Heart left ventricle (tissue), 16 donors: ENCODE measurements at regions of chr2 and their contacts with region 1.

Region 1: GRCh38 chr2:190648289-190649034 is 421 bp upstream of the NAB1 start:
- DNase-seq: peak; percentile 95 to 96 (median 95)
- ATAC-seq: peak; percentile 92 to 96 (median 94)
- H3K4me3 ChIP-seq: peak overlapping the region; percentile 72 to 93 (median 82)
- H3K27ac ChIP-seq: peak overlapping the region; percentile 80 to 98 (median 92)
- H3K4me1 ChIP-seq: peaks cover 0 to 49% (median 28%) of the 10 kb centered on the region in 12 donors
- H3K27me3 ChIP-seq: no peaks in the 10 kb centered on the region
- CTCF ChIP-seq: no peak
- POLR2A ChIP-seq: peak; percentile 8 to 79

Region 2: GRCh38 chr2:189350540-189351209 is 1297.8 kb before region 1 on chr2:
- intact Hi-C with region 1: no loop called
- DNase-seq: peak in 2 of 5 donors; percentile 17 to 24
- ATAC-seq: peak; percentile 84 to 92 (median 88)
- H3K4me3 ChIP-seq: no peak overlapping the region
- H3K27ac ChIP-seq: peak overlapping the region in 7 of 12 donors; percentile 9 to 80 (median 35)
- H3K4me1 ChIP-seq: peaks cover 0 to 26% (median 0%) of the 10 kb centered on the region in 12 donors
- H3K27me3 ChIP-seq: no peaks in the 10 kb centered on the region
- CTCF ChIP-seq: no peak
- POLR2A ChIP-seq: no peak

Region 3: GRCh38 chr2:190563109-190563508 is 85.4 kb before region 1 on chr2:
- intact Hi-C with region 1: no loop called
- DNase-seq: no peak
- ATAC-seq: no peak
- H3K4me3 ChIP-seq: no peak overlapping the region
- H3K27ac ChIP-seq: no peak overlapping the region
- H3K4me1 ChIP-seq: peaks cover 0 to 16% (median 0%) of the 10 kb centered on the region in 12 donors
- H3K27me3 ChIP-seq: no peaks in the 10 kb centered on the region
- CTCF ChIP-seq: no peak
- POLR2A ChIP-seq: no peak

Region 4: DNA sequence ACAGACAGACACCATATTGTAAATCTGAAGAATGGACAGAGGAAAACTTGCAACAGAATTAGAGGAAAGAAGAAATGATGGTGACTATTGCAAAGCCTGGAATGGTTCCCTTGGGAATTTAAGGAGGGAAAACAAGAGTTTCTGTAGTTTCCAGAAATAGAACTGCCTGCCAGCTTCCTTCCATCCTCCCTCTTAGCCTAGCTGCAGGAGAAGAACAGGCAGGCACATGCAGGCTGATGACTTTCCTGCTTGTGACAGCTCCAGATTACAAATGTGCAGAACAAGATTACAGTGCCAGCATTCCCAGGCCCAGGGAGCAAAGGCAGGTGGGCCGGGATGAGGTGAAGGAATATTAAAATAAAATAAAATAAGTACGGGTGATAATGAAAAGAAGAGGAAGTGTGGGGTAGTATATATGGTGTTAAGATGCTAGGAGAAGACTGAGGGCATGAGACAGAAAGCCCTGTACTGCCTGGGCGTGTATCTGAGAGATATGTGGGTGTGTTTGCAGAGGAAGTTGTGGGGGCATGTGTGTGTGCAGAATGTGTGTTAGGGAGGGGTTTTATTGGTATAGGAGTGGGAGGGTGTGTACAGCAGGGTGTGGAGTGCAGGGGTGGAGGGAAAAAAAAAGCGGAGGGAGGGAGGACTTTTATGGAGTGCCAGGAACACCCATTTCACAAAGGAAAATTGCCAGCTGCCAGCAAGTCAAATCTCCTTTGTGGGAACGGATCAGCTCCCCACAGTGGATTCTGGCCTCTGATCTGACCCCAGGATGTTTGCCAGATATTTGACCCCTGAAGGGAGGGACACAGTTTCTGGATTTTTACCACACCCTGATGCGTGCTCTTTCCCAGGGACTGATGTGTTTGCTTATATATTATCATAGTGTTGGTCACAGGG is 70.1 kb before region 1 on chr2:
- intact Hi-C with region 1: loop called in 6 of 10 experiments (anchors 1 to 10 kb)
- DNase-seq: peak in 4 of 5 donors; percentile 36 to 56 (median 50)
- ATAC-seq: peak; percentile 71 to 82 (median 76)
- H3K4me3 ChIP-seq: peak overlapping the region in 2 of 12 donors; percentile 1 to 4
- H3K27ac ChIP-seq: peak overlapping the region in 11 of 12 donors; percentile 26 to 68 (median 57)
- H3K4me1 ChIP-seq: peaks cover 0 to 61% (median 33%) of the 10 kb centered on the region in 12 donors
- H3K27me3 ChIP-seq: no peaks in the 10 kb centered on the region
- CTCF ChIP-seq: peak in 2 of 12 donors; percentile 6 to 10
- POLR2A ChIP-seq: no peak

Region 5: DNA sequence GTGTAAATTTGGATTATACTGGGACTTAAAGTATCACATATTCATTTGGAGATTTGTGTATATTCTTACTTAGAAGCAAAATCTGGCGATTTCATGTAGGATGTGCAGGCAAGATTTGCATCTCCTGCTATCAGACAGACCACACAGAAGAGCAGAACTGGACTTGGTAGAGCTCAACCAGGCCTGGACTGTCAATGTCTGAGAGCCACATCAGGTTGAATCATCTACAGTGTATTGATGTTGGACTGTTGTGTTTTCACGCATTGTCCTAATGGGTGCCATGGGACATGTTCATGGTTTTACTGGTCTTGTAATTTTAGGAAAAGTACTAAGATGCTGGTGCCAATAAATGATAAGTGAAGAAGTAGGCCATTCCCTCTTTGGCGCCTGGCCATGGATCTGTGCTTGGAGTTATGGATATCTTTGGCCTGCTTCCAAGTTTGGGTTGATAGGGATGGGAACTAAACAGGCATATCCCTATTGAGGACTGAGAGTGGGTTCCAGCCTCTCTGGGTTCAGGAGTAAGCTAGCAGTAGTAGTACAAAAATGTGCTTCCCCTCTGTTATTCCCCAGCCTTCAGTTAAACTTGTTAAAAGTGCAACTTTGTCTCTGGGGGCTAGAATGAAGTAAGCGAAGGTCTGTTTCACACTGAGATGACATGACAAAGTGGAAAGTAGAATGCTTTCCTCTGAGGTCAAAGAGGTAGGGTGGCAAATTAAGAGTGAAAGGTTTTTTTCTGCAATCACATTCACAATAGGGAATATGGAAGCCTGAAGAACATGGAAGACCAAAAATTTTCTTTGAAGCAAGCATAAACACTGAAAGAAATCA is 64.7 kb before region 1 on chr2:
- intact Hi-C with region 1: loop called in 6 of 10 experiments (anchors 1 to 10 kb)
- DNase-seq: peak; percentile 64 to 86 (median 69)
- ATAC-seq: peak; percentile 25 to 74 (median 38)
- H3K4me3 ChIP-seq: no peak overlapping the region
- H3K27ac ChIP-seq: peak overlapping the region in 11 of 12 donors; percentile 44 to 71 (median 54)
- H3K4me1 ChIP-seq: peaks cover 3 to 52% (median 32%) of the 10 kb centered on the region in 12 donors
- H3K27me3 ChIP-seq: no peaks in the 10 kb centered on the region
- CTCF ChIP-seq: no peak
- POLR2A ChIP-seq: no peak